ENCODE measurements at regions of chr13 and their contacts with region 1.

Region 1: GRCh38 chr13:30465585-30466357 is at the start of gene HMGB1:
- DNase-seq: peak; percentile 99
- ATAC-seq: peak; percentile 98
- total RNA-seq, gene HMGB1: 183 TPM

Region 2: DNA sequence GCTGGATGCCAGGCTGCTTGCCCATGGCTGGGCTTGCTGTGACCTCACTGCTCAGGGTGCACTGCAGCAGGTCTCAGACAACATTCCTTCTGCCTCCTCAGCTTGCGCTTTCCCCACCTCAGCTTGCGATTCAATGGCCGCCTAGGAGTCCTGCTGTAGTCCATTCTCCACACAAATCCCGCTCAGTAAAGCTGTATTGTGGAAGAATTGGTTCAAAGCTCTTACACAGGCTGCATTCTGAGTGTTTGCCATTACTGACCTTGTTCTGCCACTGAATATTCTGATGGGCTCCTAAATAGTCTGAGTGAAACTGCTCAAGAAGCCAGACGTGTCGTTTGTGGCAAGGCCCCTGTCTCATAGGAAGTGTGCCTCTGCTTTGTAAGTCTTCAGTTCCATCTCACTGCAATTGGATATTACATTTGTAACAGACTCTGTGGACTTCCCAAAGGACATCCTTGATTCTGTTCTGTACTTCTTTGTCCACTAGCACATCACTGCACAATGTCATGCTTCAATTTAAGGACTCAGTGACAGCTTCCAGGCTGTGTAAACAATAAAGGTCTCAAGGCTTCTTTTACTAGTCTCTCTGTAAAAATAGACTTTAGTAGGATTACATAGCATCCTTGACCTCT is 208.2 kb before region 1 on chr13:
- intact Hi-C with region 1: loop called (anchors 10 kb)
- DNase-seq: no peak
- ATAC-seq: peak; percentile 46

Region 3: GRCh38 chr13:30408319-30409101 is 57.3 kb before region 1 on chr13:
- intact Hi-C with region 1: loop called (anchors 5 kb)
- DNase-seq: peak; percentile 97
- ATAC-seq: peak; percentile 94

Region 4: DNA sequence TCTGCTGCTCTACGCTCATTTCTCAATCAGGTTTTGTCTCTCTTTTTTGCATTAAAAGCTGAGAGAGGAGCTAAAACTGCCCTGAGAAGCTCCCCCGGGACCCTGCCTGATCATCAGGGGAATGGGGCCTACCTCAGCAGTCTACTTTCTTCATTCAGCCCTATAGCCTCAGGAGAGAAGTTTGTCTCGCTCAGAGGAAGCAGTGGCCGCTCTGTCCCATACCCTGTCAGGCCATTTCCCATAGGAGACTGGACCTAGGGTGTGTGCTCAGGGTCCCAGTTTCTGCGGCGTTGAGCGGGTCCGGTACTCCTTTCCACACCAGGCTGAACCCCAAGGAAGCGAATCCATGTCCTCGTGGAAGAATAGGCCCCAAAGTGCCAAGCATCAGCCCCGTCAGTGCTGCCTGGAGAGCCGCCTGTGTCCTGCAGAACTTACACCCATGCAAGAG is 21.8 kb before region 1 on chr13:
- intact Hi-C with region 1: loop called (anchors 1 kb)
- DNase-seq: no peak
- ATAC-seq: no peak

Region 5: DNA sequence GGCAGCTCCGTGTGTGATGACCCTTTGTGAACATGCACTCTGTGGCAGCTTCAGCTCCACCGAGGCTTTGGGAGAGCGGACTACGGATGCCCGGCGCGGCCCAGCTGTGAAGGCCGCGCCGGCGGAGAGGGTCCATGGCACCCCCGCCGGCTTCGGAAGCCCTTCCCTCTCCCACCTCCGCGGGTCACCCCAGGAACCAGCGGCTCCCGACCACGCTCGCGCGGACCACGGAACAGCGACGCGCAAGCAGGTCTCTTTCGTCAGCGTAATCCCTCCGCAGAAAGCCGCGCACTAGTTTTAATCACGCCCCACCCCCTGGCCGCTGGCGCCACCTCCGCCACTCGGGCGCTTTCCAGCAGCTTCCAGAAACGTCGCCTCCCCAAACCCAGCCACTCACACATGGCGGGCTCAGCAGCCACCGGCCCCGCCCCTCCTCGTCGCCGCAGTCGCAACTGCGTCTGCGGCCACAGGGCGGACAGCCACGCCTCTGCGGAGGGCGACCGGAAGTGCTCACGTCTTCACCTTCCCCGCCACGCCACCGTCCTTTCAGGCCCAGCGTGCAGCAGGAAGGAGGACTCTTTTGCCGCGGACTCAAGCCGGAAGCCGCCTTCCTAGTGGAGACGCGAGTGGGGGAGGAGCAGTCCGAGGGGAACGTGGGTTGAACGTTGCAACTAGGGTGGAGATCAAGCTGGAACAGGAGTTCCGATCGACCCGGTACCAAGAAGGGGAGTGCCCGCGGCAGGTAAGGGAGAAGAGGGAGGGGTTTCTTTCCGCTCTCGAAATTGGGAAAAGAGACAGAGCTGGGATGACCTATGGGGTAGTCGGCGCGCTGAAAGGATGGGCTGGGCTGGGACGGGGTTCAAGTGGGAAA is 151.8 kb after region 1 on chr13 and contains the start of gene USPL1:
- intact Hi-C with region 1: loop called (anchors 1 kb)
- DNase-seq: peak; percentile 99
- ATAC-seq: peak; percentile 97
- total RNA-seq, gene USPL1: 10.3 TPM

Region 6: GRCh38 chr13:30802953-30803478 is 337.2 kb after region 1 on chr13:
- intact Hi-C with region 1: loop called (anchors 5 kb)
- DNase-seq: peak; percentile 95
- ATAC-seq: peak; percentile 96